ENCODE measurements at regions of chr9 and their contacts with region 1.

Region 1: DNA sequence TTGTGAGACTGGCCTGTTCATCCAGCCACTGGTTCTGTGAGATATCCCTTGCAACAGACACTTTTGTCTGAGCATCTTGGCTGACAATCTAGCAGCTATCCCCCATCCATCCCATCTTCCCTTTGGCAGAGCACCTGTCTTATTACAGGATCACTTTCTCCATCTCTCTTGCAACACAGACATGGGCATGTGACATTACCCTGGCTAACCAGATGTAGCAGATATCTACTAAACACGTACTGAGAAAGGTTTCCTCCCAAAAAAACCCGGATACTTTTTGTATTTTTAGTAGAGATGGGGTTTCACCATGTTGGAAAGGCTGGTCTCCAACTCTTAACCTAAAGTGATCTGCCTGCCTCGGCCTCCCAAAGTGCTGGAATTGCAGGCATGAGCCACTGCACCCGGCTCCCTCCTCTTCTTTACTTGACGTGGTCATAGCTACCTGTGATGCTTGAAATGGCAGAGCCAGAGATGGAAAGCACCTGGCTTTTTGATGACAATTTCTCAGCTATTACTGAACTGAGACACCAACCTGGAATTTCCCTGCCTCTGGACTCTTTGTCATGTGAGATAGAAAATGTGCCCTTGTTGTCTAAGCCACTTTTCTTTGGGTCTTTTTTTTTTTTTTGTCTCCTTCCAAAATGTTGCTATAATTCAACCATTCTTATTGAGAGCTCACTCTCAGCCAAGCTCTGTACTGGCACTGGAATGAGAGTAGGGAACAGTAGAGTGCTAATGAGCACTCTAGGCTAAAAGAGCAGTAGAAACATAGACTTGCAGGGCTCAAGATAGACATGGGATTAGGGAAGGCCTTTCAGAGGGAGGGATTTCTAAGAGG is 32.6 kb downstream of the FNBP1 start:
- DNase-seq: peak; percentile 91
- ATAC-seq: peak; percentile 65
- H3K4me3 ChIP-seq: no peak overlapping the region
- H3K4me3 Mint-ChIP-seq: peak overlapping the region; percentile 61
- H3K27ac ChIP-seq: peak overlapping the region; percentile 96 to 98
- H3K27ac Mint-ChIP-seq: peak overlapping the region; percentile 93
- H3K4me1 ChIP-seq: peaks cover 67 to 70% of the 10 kb centered on the region in 2 donors
- H3K4me1 Mint-ChIP-seq: peaks cover 74% of the 10 kb centered on the region
- H3K27me3 ChIP-seq: no peaks in the 10 kb centered on the region
- H3K27me3 Mint-ChIP-seq: no peaks in the 10 kb centered on the region
- CTCF ChIP-seq: no peak

Region 2: DNA sequence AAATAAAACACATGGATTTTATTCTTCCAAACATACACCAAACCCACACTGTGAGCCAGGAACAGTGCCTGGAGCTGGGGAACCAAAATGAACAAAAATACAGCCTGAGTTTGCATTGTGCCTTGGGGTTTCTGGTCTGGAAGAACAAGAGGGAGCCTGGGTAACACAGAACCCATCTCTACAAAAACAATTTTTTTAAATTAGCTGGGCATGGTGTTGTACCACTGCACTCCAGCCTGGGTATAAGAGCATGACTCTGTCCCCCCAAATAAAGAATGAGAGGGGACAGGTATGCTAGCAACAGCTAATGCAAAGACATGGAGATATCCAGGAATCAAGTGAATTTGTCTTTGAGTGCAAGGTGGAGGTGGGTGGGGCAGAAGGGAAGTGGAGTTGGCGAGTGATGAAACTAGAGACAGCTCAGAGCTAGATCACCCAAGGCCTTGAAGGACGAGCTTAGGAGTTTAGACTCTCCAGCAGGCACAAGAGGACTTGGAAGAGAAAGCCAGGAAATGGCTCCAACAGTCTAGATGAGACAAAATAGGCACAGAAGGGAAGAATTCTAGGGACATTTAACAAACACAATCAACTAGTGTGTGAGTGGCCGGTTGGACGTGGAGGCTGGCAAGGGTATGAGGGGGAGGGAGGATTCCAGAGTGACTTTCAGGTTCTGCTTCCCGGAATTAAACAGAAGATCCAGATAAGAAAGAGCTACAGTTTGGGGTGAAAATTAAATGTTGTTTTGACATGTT is 14.8 kb before region 1 on chr9:
- CTCF ChIA-PET with region 1: interaction called, 33 read pairs
- POLR2A ChIA-PET with region 1: interaction called, 12 read pairs
- intact Hi-C with region 1: no loop called
- DNase-seq: peak; percentile 54
- ATAC-seq: no peak
- H3K4me3 ChIP-seq: peak overlapping the region in 3 of 5 experiments; percentile 19 to 61 (median 38)
- H3K4me3 Mint-ChIP-seq: peak overlapping the region; percentile 64
- H3K27ac ChIP-seq: peak overlapping the region; percentile 91 to 98
- H3K27ac Mint-ChIP-seq: peak overlapping the region; percentile 94
- H3K4me1 ChIP-seq: peaks cover 65 to 71% of the 10 kb centered on the region in 2 donors
- H3K4me1 Mint-ChIP-seq: peaks cover 66% of the 10 kb centered on the region
- H3K27me3 ChIP-seq: no peaks in the 10 kb centered on the region
- H3K27me3 Mint-ChIP-seq: no peaks in the 10 kb centered on the region
- CTCF ChIP-seq: no peak

Region 3: DNA sequence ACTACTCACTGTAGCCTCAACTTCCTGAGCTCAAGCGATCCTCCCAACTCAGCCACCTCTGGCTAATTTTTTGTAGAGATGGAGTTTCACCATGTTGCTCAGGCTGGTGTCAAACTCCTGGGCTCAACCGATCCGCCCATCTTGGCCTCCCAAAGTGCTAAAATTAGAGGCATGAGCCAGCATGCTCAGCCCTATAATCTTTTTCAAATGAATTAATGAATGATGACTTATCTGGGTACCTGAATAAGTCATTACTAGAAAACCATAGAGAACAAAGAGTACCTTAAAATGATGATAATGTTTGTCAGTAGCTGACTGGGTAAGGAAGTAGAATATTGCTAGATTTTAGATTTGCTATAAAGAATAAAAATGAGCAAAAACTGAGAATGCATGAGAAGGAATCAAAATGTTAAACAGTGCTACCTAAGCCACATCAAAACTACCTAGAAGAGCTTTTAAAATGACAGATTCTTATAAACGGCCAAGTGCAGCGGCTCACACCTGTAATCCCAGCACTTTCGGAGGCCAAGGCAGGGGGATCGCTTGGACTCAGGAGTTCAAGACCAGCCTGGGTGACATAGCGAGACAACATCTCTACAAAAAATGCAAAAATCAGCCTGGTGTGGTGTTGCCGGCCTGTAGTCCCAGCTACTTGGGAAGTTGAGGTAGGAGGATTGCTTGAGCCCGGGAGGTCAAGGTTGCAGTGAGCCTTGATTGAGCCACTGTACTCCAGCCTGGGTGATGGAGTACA is 19.0 kb after region 1 on chr9:
- CTCF ChIA-PET with region 1: interaction called, 5 read pairs
- POLR2A ChIA-PET with region 1: interaction called, 19 read pairs
- intact Hi-C with region 1: loop called (anchors 2 kb)
- DNase-seq: no peak
- ATAC-seq: no peak
- H3K4me3 ChIP-seq: no peak overlapping the region
- H3K4me3 Mint-ChIP-seq: peak overlapping the region; percentile 55
- H3K27ac ChIP-seq: peak overlapping the region; percentile 25 to 89
- H3K27ac Mint-ChIP-seq: peak overlapping the region; percentile 54
- H3K4me1 ChIP-seq: peaks cover 84 to 87% of the 10 kb centered on the region in 2 donors
- H3K4me1 Mint-ChIP-seq: peaks cover 88% of the 10 kb centered on the region
- H3K27me3 ChIP-seq: no peaks in the 10 kb centered on the region
- H3K27me3 Mint-ChIP-seq: no peaks in the 10 kb centered on the region
- CTCF ChIP-seq: no peak

Measured in B cell (primary cell).